GM18951 (cell line): ENCODE measurements at regions of chr6 and their contacts with region 1.

Region 1: GRCh38 chr6:41602864-41603608 is 35.2 kb upstream of the MDFI start:
- POLR2A ChIP-seq: no peak

Region 2: GRCh38 chr6:41675176-41675770 is 72.2 kb after region 1 on chr6:
- in situ Hi-C with region 1: loop called (anchors 10 kb)
- POLR2A ChIP-seq: no peak

Region 3: DNA sequence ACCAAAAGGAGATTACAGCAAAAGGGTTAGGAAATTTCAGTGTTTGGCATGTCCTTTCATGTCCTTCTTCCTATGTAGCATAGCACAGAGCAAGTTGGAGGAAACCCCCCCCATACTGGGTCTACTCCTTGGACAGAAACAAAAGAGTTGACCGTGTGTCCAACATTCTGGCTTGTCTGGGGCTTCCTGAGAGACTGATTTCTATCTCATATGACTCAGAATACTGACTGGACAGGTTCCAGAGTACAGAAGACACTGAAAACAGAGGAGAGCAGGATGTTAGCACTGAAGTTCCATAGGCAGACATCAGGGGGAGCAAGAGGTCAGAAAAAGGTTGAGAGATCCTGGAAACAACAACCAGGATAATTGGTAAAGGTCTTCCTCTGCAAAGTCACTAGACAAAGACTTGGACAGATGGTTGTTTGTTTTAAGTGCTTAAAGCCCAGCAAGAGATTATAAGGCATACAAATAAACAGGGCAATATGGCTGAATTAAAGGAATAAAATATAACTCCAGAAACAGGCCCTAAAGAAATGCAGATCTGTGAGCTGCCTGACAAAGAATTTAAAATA is 243.7 kb after region 1 on chr6:
- in situ Hi-C with region 1: no loop called
- POLR2A ChIP-seq: no peak